GM12878 (cell line): ENCODE measurements at regions of chr7 and their contacts with region 1.

Region 1: GRCh38 chr7:110675383-110676103 is 415.4 kb upstream of the LRRN3 start:
- DNase-seq: no peak
- ATAC-seq: peak; percentile 92
- H3K4me3 ChIP-seq: no peak overlapping the region
- H3K27ac ChIP-seq: no peak overlapping the region
- H3K4me1 ChIP-seq: no peaks in the 10 kb centered on the region
- H3K27me3 ChIP-seq: no peaks in the 10 kb centered on the region
- CTCF ChIP-seq: no peak
- EP300 ChIP-seq: no peak
- POLR2A ChIP-seq: no peak
- RAD21 ChIP-seq: no peak

Region 2: DNA sequence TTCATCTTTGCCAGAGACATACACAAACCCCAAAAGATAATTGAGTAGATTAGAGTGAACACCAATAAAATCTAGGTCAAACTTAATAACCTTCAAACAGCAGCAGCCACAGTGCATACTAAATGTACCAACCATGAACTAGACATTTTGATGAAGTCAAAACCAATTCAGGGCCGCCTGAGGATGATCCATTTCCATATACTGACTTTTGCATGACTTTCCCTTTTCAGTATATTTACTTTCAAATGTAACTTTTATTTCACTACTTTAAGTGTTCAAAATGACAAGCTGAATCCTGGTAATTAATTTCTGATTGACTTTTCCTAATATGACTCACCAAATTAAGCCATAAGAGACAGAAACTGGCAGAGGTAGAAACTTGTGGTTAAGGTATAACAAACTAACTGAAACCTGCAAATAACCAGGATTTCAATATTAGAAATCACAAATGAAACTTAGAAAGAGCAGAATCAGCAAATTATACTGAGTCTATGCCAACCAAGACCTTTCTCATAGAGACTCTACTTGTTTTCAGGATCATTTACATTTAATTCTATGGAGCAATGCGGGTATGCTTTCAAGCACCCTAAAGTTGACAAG is 243.5 kb after region 1 on chr7:
- CTCF ChIA-PET with region 1: no interaction called
- POLR2A ChIA-PET with region 1: no interaction called
- RAD21 ChIA-PET with region 1: no interaction called
- SMC1A ChIA-PET with region 1: no interaction called
- in situ Hi-C with region 1: no loop called
- intact Hi-C with region 1: loop called (anchors 5 kb)
- DNase-seq: peak; percentile 28
- ATAC-seq: peak; percentile 93
- H3K4me3 ChIP-seq: no peak overlapping the region
- H3K27ac ChIP-seq: no peak overlapping the region
- H3K4me1 ChIP-seq: no peaks in the 10 kb centered on the region
- H3K27me3 ChIP-seq: no peaks in the 10 kb centered on the region
- CTCF ChIP-seq: no peak
- EP300 ChIP-seq: peak; percentile 53 to 71; a peak in 3 of 4 replicates
- POLR2A ChIP-seq: no peak
- RAD21 ChIP-seq: no peak